Naive thymus-derived CD4-positive, alpha-beta T cell (primary cell): ENCODE measurements at regions of chr5 and their contacts with region 1.

Region 1: DNA sequence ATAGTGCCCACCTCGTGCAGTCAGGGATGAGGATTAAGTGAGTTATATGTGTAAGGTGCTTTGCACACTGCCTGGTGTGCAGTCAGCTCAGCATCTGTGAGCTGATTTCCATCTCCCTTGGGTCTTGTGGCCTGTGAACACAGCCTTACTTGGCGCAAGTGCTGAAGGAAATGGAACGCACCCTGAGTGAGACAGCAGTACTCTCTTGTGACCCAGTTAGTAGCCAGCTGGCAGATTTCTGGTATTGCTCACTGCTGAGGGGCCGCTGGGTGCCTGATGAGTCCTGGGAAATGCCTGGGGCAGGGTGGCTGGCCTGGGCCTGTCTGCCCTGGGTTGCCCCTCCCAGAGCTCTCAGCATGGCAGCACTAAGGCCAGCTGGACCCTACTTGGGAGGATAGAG is 90.9 kb upstream of the BOD1 start:
- DNase-seq: no peak
- ATAC-seq: no peak
- H3K4me3 ChIP-seq: no peak overlapping the region
- H3K4me3 Mint-ChIP-seq: no peak overlapping the region
- H3K27ac ChIP-seq: no peak overlapping the region
- H3K27ac Mint-ChIP-seq: no peak overlapping the region
- H3K4me1 ChIP-seq: no peaks in the 10 kb centered on the region
- H3K4me1 Mint-ChIP-seq: peaks cover 0 to 3% (median 0%) of the 10 kb centered on the region in 7 donors
- H3K27me3 ChIP-seq: no peaks in the 10 kb centered on the region
- H3K27me3 Mint-ChIP-seq: peaks cover 0 to 3% (median 0%) of the 10 kb centered on the region in 5 donors

Region 2: DNA sequence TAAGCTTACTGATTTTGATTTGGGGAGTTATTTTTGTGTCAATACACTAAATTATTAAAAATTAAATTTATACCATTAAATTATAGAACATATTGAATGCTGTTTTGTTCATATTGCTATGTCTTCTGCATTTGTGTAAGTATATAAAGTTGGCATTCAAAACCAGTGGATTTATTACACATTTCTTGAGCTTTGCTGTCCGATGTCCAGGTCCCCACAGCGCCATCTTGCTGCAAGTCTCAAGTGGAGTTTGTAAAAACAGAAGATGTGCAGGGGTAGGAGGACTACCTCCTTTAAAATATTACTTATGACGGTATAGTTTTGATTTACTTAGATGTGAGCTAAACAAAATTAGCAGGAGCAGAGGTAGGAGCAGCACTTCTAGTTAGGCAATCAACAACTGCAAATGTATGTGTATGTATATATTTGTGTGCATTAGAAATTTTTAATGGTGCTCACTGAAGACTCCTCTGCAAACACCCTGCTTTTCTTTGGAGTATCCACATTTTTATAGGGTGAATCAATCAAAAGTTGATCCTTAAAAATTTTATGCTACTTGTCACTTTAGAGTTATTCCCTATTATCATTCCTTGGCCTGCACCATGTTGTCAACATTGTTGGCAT is 218.2 kb after region 1 on chr5:
- CTCF ChIA-PET with region 1: no interaction called
- POLR2A ChIA-PET with region 1: no interaction called
- intact Hi-C with region 1: loop called in 1 of 2 experiments (anchors 10 kb)
- DNase-seq: peak in 8 of 9 donors; percentile 11 to 48 (median 28)
- ATAC-seq: peak; percentile 54
- H3K4me3 ChIP-seq: no peak overlapping the region
- H3K4me3 Mint-ChIP-seq: no peak overlapping the region
- H3K27ac ChIP-seq: no peak overlapping the region
- H3K27ac Mint-ChIP-seq: no peak overlapping the region
- H3K4me1 ChIP-seq: no peaks in the 10 kb centered on the region
- H3K4me1 Mint-ChIP-seq: peaks cover 9 to 40% (median 31%) of the 10 kb centered on the region in 7 donors
- H3K27me3 ChIP-seq: no peaks in the 10 kb centered on the region
- H3K27me3 Mint-ChIP-seq: no peaks in the 10 kb centered on the region

Region 3: GRCh38 chr5:174828804-174829510 is 1121.6 kb after region 1 on chr5:
- CTCF ChIA-PET with region 1: no interaction called
- POLR2A ChIA-PET with region 1: no interaction called
- intact Hi-C with region 1: no loop called
- DNase-seq: no peak
- ATAC-seq: no peak
- H3K4me3 ChIP-seq: no peak overlapping the region
- H3K4me3 Mint-ChIP-seq: no peak overlapping the region
- H3K27ac ChIP-seq: no peak overlapping the region
- H3K27ac Mint-ChIP-seq: no peak overlapping the region
- H3K4me1 ChIP-seq: no peaks in the 10 kb centered on the region
- H3K4me1 Mint-ChIP-seq: no peaks in the 10 kb centered on the region
- H3K27me3 ChIP-seq: no peaks in the 10 kb centered on the region
- H3K27me3 Mint-ChIP-seq: peaks cover 0 to 29% (median 15%) of the 10 kb centered on the region in 5 donors